Activated B cell treated with CpG ODN at 0.5 μM for 24 hours (primary cell): ENCODE measurements at regions of chr2 and their contacts with region 1.

Region 1: DNA sequence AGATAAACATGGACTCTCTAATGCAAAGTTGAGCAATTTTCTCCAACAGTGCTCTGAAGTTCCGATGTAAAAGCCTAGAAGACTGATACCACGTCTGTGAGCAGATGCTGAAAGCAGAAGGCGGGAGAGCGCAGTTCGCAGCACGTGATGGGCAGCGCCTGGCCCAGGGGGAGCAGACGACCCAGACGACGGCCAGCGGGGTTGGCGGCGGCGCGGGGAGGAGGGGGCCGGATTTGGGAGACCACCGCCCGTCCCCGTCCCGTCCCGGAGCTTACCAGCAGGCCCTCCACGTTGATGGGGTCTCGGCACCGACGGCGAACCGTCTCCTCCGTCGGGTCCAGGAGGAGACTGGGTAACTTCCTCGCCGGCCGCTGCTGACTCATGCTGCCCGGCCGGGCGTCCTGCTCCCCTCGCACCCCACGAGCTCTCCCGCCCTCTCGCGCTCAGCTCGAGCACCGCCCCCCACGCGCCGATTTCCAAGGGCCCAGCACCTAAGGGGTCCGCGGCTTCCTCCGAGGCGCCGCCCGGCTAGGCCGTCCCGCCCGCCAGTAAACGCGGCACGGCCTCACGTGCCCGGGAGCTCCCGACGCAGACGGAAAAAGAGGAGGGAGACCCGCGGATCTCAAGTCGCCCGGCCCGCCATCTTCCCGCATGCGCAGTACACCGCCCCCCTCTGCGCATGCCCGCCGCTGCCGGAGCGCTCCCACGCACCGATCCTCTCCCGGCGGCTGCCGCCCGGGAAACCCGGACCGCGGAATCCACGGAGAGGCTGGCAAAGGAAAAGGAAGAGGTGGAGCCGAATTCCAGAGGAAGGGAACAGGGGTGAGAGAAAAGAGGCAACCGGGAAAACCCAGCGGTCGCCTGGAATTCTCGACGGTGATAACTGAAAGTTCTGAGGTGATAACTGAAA is at the start of gene E2F6:
- DNase-seq: peak; percentile 93
- ATAC-seq: peak; percentile 81
- H3K4me3 Mint-ChIP-seq: peak within 1 kb of the TSS; percentile 98
- H3K27ac Mint-ChIP-seq: peak within 1 kb of the TSS; percentile 89
- H3K4me1 Mint-ChIP-seq: peaks cover 31% of the 10 kb centered on the region
- H3K27me3 Mint-ChIP-seq: no peaks in the 10 kb centered on the region
- CTCF ChIP-seq: no peak
- total RNA-seq, gene E2F6: 11.8 and 12.4 TPM in 2 replicates

Region 2: GRCh38 chr2:11154923-11155380 is 310.8 kb before region 1 on chr2:
- CTCF ChIA-PET with region 1: no interaction called
- POLR2A ChIA-PET with region 1: interaction called, 13 read pairs
- intact Hi-C with region 1: loop called (anchors 1 kb)
- DNase-seq: peak; percentile 91
- ATAC-seq: peak; percentile 92
- H3K4me3 Mint-ChIP-seq: peak overlapping the region; percentile 85
- H3K27ac Mint-ChIP-seq: peak overlapping the region; percentile 84
- H3K4me1 Mint-ChIP-seq: peaks cover 20% of the 10 kb centered on the region
- H3K27me3 Mint-ChIP-seq: no peaks in the 10 kb centered on the region
- CTCF ChIP-seq: no peak

Region 3: DNA sequence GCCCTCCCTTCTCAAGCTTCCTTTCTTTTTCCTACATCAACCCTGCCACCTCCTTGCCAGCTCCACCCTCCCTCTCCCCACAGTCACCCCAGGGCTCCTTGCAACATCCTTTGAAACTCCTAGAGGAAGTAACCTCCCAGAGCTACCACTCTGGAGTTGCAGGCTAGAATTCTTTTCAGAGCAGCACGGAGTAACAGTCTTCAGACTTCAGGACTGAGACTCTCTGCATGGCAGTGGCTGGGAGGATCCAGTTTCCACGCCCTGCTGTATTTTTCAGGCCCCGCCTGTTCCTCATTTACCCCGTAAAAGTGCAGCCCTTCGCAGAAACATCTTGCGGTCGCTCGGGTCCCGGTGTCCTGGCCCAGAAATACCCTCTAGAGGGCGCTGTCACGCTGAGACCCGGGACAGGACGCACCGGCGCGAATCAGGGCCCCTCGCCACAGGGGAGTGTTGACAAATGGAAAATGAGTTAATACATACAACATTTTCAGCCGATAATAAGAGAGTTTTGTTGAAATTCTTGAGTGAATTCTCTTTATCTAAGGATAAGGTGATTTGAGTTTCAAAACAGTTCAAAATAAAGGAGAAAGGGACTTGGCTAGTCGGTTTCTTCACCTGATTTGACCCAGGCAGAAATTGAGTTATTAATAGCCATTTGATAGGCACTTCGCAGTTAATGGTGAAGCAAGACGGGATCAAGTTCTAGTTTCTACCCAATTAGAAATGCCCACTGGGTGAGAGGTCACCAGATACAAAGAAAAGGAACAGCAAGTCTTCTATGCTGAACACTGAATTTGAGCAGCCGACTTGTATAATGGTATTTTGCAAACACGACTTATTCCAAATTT is 222.7 kb after region 1 on chr2:
- CTCF ChIA-PET with region 1: no interaction called
- POLR2A ChIA-PET with region 1: no interaction called
- intact Hi-C with region 1: loop called (anchors 5 kb)
- DNase-seq: peak; percentile 68
- ATAC-seq: peak; percentile 87
- H3K4me3 Mint-ChIP-seq: peak overlapping the region; percentile 39
- H3K27ac Mint-ChIP-seq: no peak overlapping the region
- H3K4me1 Mint-ChIP-seq: peaks cover 9% of the 10 kb centered on the region
- H3K27me3 Mint-ChIP-seq: peaks cover 8% of the 10 kb centered on the region
- CTCF ChIP-seq: no peak